Left cardiac atrium (tissue), 4 donors: ENCODE measurements at regions of chr15 and their contacts with region 1.

Region 1: DNA sequence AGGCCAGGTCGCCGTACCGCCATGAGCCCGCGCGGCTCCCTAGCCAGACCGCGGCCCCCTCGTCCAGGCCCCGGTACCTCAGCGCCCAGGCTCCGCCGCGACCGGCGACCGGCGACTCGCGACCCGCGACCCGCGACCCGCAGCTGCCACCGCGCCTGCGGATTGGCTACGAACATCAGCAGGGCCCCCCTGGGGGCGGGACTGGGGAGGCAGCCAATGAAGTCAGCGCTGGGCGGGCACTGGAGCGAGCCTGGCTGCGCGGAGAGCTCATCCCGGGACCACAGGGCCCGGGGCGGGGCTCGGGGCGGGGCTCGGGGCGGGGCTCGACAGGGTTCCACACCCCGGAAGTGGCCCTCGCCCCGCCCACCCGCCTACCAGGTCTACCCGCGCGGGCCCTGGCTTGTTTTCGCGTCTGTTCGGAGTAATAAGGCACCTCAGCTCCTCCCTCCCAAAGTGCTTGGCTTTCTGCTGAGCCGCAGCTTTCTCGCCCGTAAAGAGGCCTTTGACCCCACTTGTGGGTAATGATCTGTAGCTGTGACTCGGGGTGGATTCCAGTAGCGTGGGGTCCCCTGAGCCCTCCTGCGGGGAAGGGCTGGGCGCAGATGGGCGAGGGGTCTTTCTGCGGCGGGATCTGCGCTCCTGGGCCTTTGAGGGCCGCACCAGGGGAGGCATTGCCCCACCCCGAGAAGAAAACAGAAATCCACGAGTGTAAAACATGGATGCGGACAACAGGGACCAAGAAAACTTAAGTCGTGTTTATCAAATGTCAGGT is at the start of gene LYSMD4:
- DNase-seq: peak; percentile 99
- ATAC-seq: peak; percentile 98 to 99
- total RNA-seq, gene LYSMD4: 7.8 to 11.5 TPM

Region 2: DNA sequence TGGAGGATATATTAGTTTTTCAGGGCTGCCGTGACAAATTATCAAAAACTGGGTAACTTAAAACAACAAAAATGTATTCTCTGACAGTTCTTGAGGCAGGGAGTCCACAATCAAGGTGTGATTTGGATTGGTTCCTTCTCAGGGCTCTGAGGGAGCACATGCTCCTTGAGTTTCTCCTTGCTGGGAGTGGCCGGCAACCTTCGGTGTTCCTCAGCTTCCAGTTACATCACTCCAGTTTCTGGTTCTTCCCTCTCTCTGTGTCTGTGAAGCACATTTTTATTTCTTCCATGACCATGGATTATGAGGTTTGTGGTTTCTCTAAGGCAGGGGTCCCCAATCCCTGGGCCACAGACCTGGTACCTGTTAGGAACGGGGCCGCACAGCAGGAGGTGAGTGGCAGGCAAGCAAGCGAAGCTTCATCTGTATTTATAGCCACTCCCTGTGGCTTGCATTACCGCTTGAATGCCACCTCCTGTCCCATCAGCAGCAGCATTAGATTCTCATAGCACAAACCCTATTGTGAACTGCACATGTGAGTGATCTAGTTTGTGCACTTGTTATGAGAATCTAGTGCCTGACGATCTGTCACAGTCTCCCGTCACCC is 457.8 kb before region 1 on chr15:
- intact Hi-C with region 1: loop called (anchors 5 to 10 kb)
- DNase-seq: no peak
- ATAC-seq: no peak

Region 3: GRCh38 chr15:99719096-99719541 is 14.3 kb before region 1 on chr15:
- intact Hi-C with region 1: loop called in 1 of 2 experiments (anchors 2 kb)
- DNase-seq: no peak
- ATAC-seq: no peak